ENCODE measurements at regions of chr1 and their contacts with region 1.

Region 1: DNA sequence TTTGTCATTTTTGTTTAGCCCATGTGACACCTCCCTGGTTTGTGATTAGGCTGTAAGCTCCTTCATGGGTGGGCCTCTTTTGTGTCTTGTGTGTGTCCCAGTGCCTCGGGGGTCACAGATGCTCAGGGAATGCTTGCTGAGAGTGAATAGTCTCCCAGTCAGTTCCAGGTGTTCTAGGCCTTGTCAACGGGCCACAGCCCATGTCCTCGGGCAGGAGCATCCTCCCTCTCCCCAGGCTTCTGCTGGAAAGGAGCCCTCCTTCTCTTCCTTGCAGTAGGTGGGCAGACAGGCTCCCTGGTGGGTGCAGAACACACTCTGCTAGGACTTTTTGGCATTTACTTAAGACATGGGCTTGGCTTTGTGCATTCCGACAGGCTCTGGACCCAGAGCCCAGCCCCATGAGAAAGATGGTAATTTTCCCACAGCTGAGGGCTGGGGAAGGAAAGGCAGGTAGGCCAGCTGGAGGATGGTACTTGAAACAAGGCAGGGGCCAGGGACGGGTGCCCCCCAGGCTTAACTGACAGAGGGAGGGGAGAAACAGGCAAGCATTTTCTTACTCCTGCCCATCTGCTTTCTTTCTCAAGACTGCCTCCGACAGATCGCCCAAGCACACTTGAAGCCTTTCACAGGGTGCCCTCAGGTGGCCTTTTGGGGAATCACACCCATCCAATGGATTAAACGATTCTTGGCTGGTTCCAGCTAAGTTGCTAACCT is 7.1 kb upstream of the CPLANE2 start:
- DNase-seq: peak; percentile 95
- H3K4me3 ChIP-seq: no peak overlapping the region
- H3K27ac ChIP-seq: peak overlapping the region; percentile 17 to 55 (median 37)
- H3K4me1 ChIP-seq: peaks cover 39 to 46% (median 45%) of the 10 kb centered on the region in 4 donors
- H3K27me3 ChIP-seq: no peaks in the 10 kb centered on the region
- CTCF ChIP-seq: peak; percentile 79 to 90 (median 90)
- EP300 ChIP-seq: no peak
- POLR2A ChIP-seq: no peak

Region 2: DNA sequence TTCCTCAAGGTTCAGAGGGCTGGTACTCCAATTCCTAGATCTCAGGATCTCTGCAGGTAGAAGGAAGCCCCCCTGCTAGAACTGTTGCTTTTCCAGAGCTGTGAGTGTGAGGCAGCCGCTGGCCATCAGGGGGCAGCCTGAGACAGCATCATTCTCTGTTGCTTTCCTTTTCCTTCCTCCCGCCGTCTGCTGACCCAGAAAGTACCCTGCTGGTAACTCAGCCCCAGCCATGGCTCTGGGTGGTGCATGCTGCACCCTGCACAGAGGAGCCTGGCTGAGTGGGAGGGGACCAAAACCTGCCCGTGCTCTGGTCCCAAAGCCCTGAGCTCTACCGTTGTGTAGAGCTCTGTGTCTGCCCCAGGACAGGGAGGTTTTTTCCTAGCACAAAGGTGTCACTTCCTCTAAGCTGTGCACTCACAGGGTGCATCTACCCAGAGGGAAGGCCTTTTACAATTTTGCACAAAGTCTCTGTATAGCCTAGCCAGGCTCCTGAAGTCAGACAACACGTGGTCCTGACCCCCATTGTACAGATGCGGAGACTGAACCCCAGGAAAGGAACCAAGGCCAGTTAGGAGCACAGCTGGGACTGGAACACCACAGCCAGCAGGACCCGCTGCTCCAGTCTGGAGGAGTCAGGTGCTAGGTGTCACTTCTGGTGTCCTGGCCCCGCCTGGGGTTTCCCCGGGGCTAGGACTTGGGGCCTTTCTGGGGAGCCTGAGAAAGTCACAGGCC is 165.0 kb before region 1 on chr1:
- intact Hi-C with region 1: loop called (anchors 2 kb)
- DNase-seq: peak; percentile 95
- H3K4me3 ChIP-seq: no peak overlapping the region
- H3K27ac ChIP-seq: no peak overlapping the region
- H3K4me1 ChIP-seq: peaks cover 24 to 40% (median 32%) of the 10 kb centered on the region in 4 donors
- H3K27me3 ChIP-seq: no peaks in the 10 kb centered on the region
- CTCF ChIP-seq: peak; percentile 85 to 98 (median 85)
- EP300 ChIP-seq: no peak
- POLR2A ChIP-seq: no peak

Region 3: DNA sequence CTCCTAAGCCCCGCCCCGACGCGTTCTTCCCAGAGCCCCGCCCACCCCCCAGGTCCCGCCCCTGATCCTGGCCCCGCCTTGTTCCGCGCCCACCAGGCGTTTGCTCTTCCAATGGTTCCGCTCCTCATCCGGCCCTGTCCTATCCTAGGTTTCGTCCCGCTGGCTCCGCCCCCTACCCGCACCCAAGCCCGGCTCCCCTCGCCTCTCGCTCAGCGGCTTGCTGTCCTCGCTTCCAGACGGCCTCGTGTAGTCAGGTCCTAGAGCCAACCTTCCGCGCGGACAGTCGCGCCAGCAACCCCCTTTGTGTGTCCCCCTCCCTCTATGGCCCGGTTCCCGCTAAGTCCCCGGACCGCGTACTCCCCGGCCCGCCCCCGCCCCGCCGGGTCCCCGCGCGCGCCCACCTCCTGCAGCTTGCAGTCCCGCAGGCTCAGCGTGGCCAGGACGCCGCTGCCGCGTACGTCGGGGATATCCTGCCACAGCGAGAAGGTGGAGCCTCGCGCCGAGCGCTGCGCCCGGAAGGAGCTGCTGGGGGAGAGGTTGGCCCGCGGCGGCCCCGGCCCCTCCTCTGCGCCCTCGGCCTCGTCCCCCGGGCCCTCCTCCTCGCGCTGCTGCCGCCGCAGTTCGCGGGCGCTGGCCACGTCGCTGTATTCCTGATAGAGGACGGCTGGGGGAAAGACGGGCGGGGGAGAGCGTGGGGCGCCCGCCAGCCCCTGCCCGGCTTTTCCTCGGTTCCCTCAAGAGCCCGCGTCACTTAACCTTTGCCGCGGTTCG is 37.4 kb before region 1 on chr1:
- intact Hi-C with region 1: loop called (anchors 5 kb)
- DNase-seq: peak; percentile 98
- H3K4me3 ChIP-seq: peak overlapping the region; percentile 54 to 67 (median 62)
- H3K27ac ChIP-seq: peak overlapping the region; percentile 80 to 96 (median 92)
- H3K4me1 ChIP-seq: peaks cover 10 to 28% (median 23%) of the 10 kb centered on the region in 4 donors
- H3K27me3 ChIP-seq: no peaks in the 10 kb centered on the region
- CTCF ChIP-seq: no peak
- EP300 ChIP-seq: no peak
- POLR2A ChIP-seq: peak; percentile 26

Region 4: GRCh38 chr1:16351994-16352841 is 108.1 kb after region 1 on chr1 and contains the start of gene FBXO42:
- intact Hi-C with region 1: no loop called
- DNase-seq: peak; percentile 96
- H3K4me3 ChIP-seq: peak within 1 kb of the TSS; percentile 81 to 95 (median 86)
- H3K27ac ChIP-seq: peak within 1 kb of the TSS; percentile 93 to 97 (median 97)
- H3K4me1 ChIP-seq: peaks cover 22 to 42% (median 39%) of the 10 kb centered on the region in 4 donors
- H3K27me3 ChIP-seq: no peaks in the 10 kb centered on the region
- CTCF ChIP-seq: peak; percentile 47 to 52 (median 52)
- EP300 ChIP-seq: no peak
- POLR2A ChIP-seq: peak; percentile 63
- total RNA-seq, gene FBXO42: 22.0 to 52.6 (median 35.3) TPM

Region 5: GRCh38 chr1:16366722-16367257 is 122.7 kb after region 1 on chr1 and contains the start of gene SZRD1:
- intact Hi-C with region 1: loop called (anchors 5 kb)
- DNase-seq: peak; percentile 99
- H3K4me3 ChIP-seq: peak within 1 kb of the TSS; percentile 74 to 97 (median 84)
- H3K27ac ChIP-seq: peak within 1 kb of the TSS; percentile 97 to 98 (median 98)
- H3K4me1 ChIP-seq: peaks cover 40 to 69% (median 69%) of the 10 kb centered on the region in 4 donors
- H3K27me3 ChIP-seq: no peaks in the 10 kb centered on the region
- CTCF ChIP-seq: peak in 1 of 3 experiments; percentile 5
- EP300 ChIP-seq: no peak
- POLR2A ChIP-seq: no peak
- total RNA-seq, gene SZRD1: 70.2 to 110 (median 98.3) TPM

Measured in esophagus muscularis mucosa (tissue), 4 donors.